ENCODE measurements at regions of chr10 and their contacts with region 1.

Region 1: GRCh38 chr10:35027567-35027966 is 62.6 kb downstream of the CUL2 start:
- DNase-seq: peak; percentile 38
- H3K4me3 Mint-ChIP-seq: no peak overlapping the region
- H3K27ac Mint-ChIP-seq: no peak overlapping the region
- H3K4me1 Mint-ChIP-seq: peaks cover 5% of the 10 kb centered on the region
- H3K27me3 Mint-ChIP-seq: no peaks in the 10 kb centered on the region
- CTCF ChIP-seq: peak; percentile 44

Region 2: DNA sequence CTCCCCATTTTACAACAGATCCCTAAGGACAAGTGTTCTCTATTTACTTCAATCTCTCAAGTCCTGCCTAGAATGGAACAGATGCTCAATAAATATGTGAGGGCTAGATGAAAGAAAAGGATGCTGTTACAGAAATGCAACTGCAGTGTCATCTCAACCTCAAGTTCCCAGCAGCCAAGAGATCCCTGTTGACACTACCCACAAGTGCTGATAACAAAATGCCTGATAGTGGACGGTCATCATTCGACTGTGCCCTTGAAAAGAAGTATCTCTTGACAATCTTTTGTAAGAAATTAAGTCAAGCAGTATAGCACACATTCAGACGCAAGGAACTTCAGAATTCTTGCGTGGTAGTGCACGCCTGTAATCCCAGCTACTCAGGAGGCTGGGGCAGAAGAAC is 345.6 kb before region 1 on chr10:
- CTCF ChIA-PET with region 1: no interaction called
- POLR2A ChIA-PET with region 1: no interaction called
- intact Hi-C with region 1: loop called (anchors 5 kb)
- DNase-seq: no peak
- H3K4me3 Mint-ChIP-seq: no peak overlapping the region
- H3K27ac Mint-ChIP-seq: no peak overlapping the region
- H3K4me1 Mint-ChIP-seq: peaks cover 6% of the 10 kb centered on the region
- H3K27me3 Mint-ChIP-seq: no peaks in the 10 kb centered on the region
- CTCF ChIP-seq: no peak

Region 3: DNA sequence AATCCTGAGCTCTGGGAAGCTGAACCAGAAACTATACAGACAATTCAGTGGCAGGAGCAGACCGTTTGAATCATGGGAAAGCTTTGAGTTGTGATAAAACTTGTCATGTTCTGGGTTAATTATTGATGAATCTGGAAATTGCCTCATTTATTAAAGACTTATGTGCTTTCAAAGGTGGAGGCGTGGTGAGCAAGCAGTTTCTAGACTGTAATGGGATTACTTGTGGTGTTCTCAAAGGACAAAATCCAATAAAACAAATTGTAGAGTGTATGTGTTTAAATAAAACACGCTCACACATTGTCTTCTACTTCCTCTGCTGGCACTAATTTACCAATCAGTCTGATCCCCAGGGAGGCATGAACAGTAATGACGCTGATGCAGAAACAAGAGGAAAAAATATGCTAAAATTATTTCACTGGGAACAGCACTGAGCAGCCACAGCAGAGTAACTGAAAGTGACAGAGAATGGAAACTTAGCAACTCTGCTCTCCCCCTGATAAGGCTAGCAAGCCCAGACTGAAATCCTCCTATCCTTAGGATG is 237.5 kb before region 1 on chr10:
- CTCF ChIA-PET with region 1: no interaction called
- POLR2A ChIA-PET with region 1: no interaction called
- intact Hi-C with region 1: no loop called
- DNase-seq: no peak
- H3K4me3 Mint-ChIP-seq: no peak overlapping the region
- H3K27ac Mint-ChIP-seq: no peak overlapping the region
- H3K4me1 Mint-ChIP-seq: peaks cover 28% of the 10 kb centered on the region
- H3K27me3 Mint-ChIP-seq: no peaks in the 10 kb centered on the region
- CTCF ChIP-seq: no peak